Left lung (tissue), 14 donors: ENCODE measurements at regions of chr14 and their contacts with region 1.

Region 1: GRCh38 chr14:100187247-100187833 is 27.9 kb upstream of the DEGS2 start:
- DNase-seq: peak in 1 of 4 donors; percentile 61
- ATAC-seq: peak; percentile 79
- H3K4me3 ChIP-seq: no peak overlapping the region
- H3K27ac ChIP-seq: no peak overlapping the region
- H3K4me1 ChIP-seq: peaks cover 4 to 9% of the 10 kb centered on the region in 2 donors
- H3K27me3 ChIP-seq: no peaks in the 10 kb centered on the region
- CTCF ChIP-seq: no peak

Region 2: GRCh38 chr14:100117633-100118395 is 69.5 kb before region 1 on chr14:
- intact Hi-C with region 1: loop called in 1 of 2 experiments (anchors 10 kb)
- DNase-seq: no peak
- ATAC-seq: no peak
- H3K4me3 ChIP-seq: no peak overlapping the region
- H3K27ac ChIP-seq: no peak overlapping the region
- H3K4me1 ChIP-seq: no peaks in the 10 kb centered on the region
- H3K27me3 ChIP-seq: no peaks in the 10 kb centered on the region
- CTCF ChIP-seq: no peak

Region 3: DNA sequence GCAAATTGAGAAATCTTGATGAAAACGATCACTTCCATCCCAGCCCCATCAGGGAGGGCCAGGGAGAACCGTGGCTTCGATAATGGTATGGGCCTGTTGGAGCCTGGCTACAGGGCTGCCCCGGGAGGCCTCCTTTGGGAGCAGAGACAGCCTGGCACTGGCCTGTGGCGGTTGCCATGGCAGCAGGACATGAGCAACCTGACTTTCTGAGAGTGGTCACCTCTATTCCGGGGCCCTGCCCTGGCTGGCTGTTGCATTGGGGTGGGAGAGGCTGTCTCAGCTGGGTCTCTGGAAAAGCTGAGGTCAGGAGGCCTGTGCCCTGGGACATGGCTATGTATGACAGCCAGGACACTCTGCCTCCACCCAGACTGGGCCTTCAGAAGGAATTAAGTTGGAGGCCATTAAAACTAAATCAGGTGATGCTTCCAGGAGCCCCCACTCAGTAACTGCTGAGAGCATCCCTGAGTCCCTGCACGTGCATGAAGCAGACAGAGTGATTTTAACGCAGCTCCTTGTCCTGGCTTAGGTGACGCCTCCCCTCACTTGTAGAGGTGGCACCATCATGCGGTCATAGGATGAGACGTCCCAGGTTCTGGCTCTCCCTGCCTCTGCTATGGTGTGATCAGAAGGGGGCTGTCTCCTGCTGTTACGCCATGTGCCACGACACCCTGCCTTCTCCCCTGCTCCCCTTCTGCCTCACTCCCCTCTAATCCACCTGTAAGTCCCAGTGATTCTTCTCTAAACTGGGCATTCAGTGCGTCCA is 262.1 kb after region 1 on chr14:
- intact Hi-C with region 1: no loop called
- DNase-seq: no peak
- ATAC-seq: no peak
- H3K4me3 ChIP-seq: no peak overlapping the region
- H3K27ac ChIP-seq: no peak overlapping the region
- H3K4me1 ChIP-seq: no peaks in the 10 kb centered on the region
- H3K27me3 ChIP-seq: no peaks in the 10 kb centered on the region
- CTCF ChIP-seq: no peak